ENCODE measurements at regions of chr14 and their contacts with region 1.

Region 1: GRCh38 chr14:87896393-87897380 is 96.3 kb downstream of the GALC start:
- DNase-seq: peak; percentile 46
- H3K4me3 ChIP-seq: no peak overlapping the region
- H3K27ac ChIP-seq: no peak overlapping the region
- H3K4me1 ChIP-seq: no peaks in the 10 kb centered on the region
- H3K27me3 ChIP-seq: peaks cover 0 to 4% of the 10 kb centered on the region in 2 experiments
- CTCF ChIP-seq: peak; percentile 37 to 39
- POLR2A ChIP-seq: no peak

Region 2: GRCh38 chr14:87745507-87746118 is 151.1 kb before region 1 on chr14:
- CTCF ChIA-PET with region 1: no interaction called
- POLR2A ChIA-PET with region 1: no interaction called
- dilution Hi-C with region 1: no loop called
- intact Hi-C with region 1: loop called (anchors 1 kb)
- DNase-seq: no peak
- H3K4me3 ChIP-seq: no peak overlapping the region
- H3K27ac ChIP-seq: no peak overlapping the region
- H3K4me1 ChIP-seq: no peaks in the 10 kb centered on the region
- H3K27me3 ChIP-seq: no peaks in the 10 kb centered on the region
- CTCF ChIP-seq: peak; percentile 31 to 40
- POLR2A ChIP-seq: no peak

Region 3: DNA sequence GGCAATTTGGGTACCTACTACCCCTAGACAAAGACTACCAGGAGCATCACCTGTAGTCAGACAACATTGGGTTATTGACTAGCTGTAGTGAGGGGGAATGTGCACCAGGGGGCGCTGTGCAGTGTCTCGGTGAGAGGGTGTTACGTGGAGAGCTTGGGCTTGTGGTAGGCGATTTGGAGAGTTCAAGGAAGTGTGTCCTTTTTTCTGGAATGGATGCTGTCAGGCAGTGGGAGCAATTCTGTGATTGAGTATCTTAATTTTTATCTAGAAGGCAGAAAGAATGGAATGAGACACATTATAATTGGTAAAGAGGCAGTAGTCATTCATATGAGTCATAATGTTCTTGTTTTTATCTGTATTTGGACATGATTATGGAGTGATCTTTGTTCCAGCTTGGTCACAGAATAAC is 91.4 kb before region 1 on chr14:
- CTCF ChIA-PET with region 1: no interaction called
- POLR2A ChIA-PET with region 1: no interaction called
- dilution Hi-C with region 1: no loop called
- intact Hi-C with region 1: loop called (anchors 1 kb)
- DNase-seq: no peak
- H3K4me3 ChIP-seq: no peak overlapping the region
- H3K27ac ChIP-seq: no peak overlapping the region
- H3K4me1 ChIP-seq: no peaks in the 10 kb centered on the region
- H3K27me3 ChIP-seq: no peaks in the 10 kb centered on the region
- CTCF ChIP-seq: peak; percentile 22 to 52
- POLR2A ChIP-seq: no peak